ENCODE measurements at regions of chr13 and their contacts with region 1.

Region 1: DNA sequence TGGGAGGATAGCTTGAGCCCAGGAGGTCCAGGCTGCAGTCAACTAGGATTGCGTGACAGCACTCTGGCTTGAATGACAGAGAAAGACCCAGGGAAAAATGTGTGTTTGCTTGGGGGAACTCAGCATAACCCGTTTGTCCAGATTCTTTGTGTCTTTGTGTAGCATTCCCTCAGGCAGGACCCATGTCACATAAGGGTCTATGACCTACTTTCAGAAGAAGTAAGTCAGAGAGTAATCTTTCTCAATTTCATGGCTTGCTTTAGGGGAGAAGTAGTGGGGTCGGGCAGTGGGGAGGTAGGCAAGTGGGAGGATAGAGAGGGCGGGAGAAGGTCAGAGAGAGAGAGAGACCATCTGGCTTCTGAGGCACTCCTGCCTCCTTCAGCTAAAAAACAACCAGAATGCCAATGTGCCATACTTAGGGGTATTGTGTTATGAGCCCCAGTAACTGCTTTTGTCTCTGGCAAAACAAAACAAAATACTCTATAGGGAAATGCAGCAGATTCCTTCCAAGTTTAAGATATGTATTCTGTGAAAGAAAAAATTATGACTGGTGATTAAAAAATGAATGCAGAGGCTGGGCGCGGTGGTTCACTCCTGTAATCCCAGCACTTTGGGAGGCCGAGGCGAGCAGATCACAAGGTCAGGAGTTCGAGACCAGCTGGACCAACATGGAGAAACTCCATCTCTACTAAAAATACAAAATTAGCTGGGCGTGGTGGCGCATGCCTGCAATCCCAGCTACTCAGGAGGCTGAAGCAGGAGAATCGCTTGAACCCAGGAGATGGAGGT is 12.1 kb upstream of the PSPC1 start:
- DNase-seq: peak; percentile 71 to 99
- H3K4me3 ChIP-seq: peak overlapping the region; percentile 30; the same call in 1 of the 2 replicates
- H3K27ac ChIP-seq: peak overlapping the region; percentile 99
- H3K4me1 ChIP-seq: peaks cover 55% of the 10 kb centered on the region
- H3K27me3 ChIP-seq: no peaks in the 10 kb centered on the region
- CTCF ChIP-seq: no peak

Region 2: DNA sequence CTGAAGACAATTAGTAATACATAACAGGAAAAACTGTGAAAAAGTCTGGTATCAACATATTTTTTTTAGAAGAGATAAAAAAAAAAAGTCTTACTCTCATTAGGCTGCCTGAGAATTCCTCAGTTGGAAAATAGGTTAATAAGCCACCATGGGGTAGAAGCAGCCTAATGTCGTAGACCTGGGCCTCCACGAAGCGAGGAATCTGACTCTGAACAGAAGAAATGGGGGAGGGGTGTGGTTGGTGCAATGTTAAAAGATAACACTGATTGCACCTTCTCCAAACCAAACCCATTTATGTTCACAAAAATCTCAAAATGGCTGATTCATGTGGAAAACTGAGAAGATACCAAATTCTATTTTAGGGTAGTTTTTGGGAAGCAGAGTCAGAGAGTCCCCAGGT is 99.0 kb before region 1 on chr13:
- CTCF ChIA-PET with region 1: no interaction called
- POLR2A ChIA-PET with region 1: no interaction called
- intact Hi-C with region 1: no loop called
- DNase-seq: no peak
- H3K4me3 ChIP-seq: no peak overlapping the region
- H3K27ac ChIP-seq: no peak overlapping the region
- H3K4me1 ChIP-seq: no peaks in the 10 kb centered on the region; the same call in 1 of the 2 replicates
- H3K27me3 ChIP-seq: no peaks in the 10 kb centered on the region
- CTCF ChIP-seq: no peak

Region 3: GRCh38 chr13:19810996-19811891 is 16.4 kb after region 1 on chr13:
- CTCF ChIA-PET with region 1: interaction called, 12 read pairs
- POLR2A ChIA-PET with region 1: no interaction called
- intact Hi-C with region 1: no loop called
- DNase-seq: peak in 1 of 2 experiments; percentile 53
- H3K4me3 ChIP-seq: no peak overlapping the region
- H3K27ac ChIP-seq: no peak overlapping the region
- H3K4me1 ChIP-seq: no peaks in the 10 kb centered on the region
- H3K27me3 ChIP-seq: no peaks in the 10 kb centered on the region
- CTCF ChIP-seq: no peak

Region 4: GRCh38 chr13:20118268-20119140 is 323.7 kb after region 1 on chr13:
- CTCF ChIA-PET with region 1: no interaction called
- POLR2A ChIA-PET with region 1: no interaction called
- intact Hi-C with region 1: no loop called
- DNase-seq: peak in 1 of 2 experiments; percentile 52
- H3K4me3 ChIP-seq: peak overlapping the region; percentile 60
- H3K27ac ChIP-seq: no peak overlapping the region
- H3K4me1 ChIP-seq: peaks cover 20% of the 10 kb centered on the region
- H3K27me3 ChIP-seq: no peaks in the 10 kb centered on the region
- CTCF ChIP-seq: no peak